Activated CD4-positive, alpha-beta T cell treated with anti-CD3 and anti-CD28 coated beads, Interleukin-2, amount 10 ng/mL, durations not matched to agents 24 days and 14 days (primary cell): ENCODE measurements at regions of chr11 and their contacts with region 1.

Region 1: GRCh38 chr11:57741132-57742086 is at the start of gene SELENOH:
- DNase-seq: peak; percentile 98
- H3K4me3 Mint-ChIP-seq: peak within 1 kb of the TSS; percentile 93
- H3K27ac Mint-ChIP-seq: peak within 1 kb of the TSS; percentile 96
- H3K4me1 Mint-ChIP-seq: peaks cover 30% of the 10 kb centered on the region
- H3K27me3 Mint-ChIP-seq: no peaks in the 10 kb centered on the region
- total RNA-seq, gene SELENOH: 211 and 216 TPM in 2 replicates

Region 2: GRCh38 chr11:57657194-57658022 is 84.0 kb before region 1 on chr11 and contains the start of gene CLP1:
- intact Hi-C with region 1: loop called (anchors 1 kb)
- DNase-seq: peak; percentile 100
- H3K4me3 Mint-ChIP-seq: peak within 1 kb of the TSS; percentile 86
- H3K27ac Mint-ChIP-seq: peak within 1 kb of the TSS; percentile 88
- H3K4me1 Mint-ChIP-seq: peaks cover 18% of the 10 kb centered on the region
- H3K27me3 Mint-ChIP-seq: no peaks in the 10 kb centered on the region
- total RNA-seq, gene CLP1: 18.5 and 19.8 TPM in 2 replicates

Region 3: DNA sequence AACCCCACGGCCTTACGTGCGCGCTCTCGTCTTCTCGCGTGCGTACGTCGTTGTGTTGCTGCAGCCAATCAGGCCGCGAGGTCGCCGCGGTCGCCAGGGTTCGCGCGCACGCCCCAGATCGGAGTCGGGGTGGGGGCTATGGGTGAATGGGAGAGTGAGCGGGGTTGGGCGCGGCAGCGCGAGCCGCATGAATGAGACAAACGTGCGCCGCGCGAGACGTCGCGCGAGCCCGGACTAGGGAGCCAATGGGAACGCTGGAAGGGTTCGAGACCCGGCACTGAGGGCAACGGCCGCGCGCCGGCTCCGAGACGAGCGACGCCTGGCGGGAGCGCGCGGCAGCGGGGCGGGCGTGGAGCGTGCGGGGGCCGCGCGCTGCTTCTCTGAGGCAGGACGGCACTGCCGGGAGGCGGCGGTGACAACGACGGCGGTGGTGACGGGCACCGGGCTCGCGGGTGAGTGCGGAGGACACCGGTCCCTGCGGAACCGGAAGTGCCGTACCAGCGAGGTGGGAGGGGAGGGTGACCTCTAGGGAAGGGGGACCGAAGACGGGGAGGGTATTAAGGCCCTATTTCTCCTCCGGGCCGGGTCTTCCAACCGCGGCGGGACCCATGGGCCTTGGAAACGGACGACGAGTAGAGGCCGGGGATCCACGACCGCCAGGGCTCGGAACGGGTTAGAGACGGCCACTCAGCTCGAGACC is 73.5 kb before region 1 on chr11 and contains the start of gene ZDHHC5:
- intact Hi-C with region 1: loop called (anchors 1 kb)
- DNase-seq: peak; percentile 100
- H3K4me3 Mint-ChIP-seq: peak within 1 kb of the TSS; percentile 86
- H3K27ac Mint-ChIP-seq: peak within 1 kb of the TSS; percentile 97
- H3K4me1 Mint-ChIP-seq: peaks cover 35% of the 10 kb centered on the region
- H3K27me3 Mint-ChIP-seq: no peaks in the 10 kb centered on the region
- total RNA-seq, gene ZDHHC5: 78.4 and 80.9 TPM in 2 replicates

Region 4: DNA sequence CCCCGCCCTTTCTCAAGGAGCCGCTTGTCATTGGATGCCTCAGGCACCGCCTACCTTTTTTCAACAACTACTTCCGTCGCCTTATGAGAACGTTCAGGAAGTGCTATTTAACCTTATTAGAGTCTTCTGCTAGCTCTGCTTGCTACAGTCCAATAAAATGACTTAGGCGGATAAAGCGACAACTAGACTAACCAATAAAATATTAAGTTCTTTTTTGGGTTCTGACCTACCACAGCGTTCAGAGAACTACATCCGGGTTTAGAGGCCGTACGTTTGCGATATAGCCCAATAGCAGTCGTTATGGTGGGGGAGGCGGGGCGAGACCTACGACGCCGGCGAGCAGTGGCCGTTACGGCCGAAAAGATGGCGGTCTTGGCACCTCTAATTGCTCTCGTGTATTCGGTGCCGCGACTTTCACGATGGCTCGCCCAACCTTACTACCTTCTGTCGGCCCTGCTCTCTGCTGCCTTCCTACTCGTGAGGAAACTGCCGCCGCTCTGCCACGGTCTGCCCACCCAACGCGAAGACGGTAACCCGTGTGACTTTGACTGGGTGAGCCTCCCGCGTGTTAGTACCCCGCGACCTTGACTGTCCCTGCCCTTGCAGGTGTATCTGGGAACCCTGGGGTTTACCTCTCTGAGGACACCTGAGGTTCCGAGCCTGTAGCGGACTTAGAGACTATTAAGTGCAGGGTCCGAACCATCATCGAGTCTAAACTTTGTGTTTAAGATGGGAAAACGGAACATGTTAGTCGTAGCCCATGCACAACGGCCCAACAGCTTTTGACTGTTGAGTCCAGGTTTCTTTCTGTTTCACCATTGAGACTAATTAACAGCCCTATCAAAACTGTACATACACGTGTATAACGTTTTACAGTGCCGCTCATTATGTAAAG is 28.9 kb before region 1 on chr11 and contains the start of gene TMX2:
- intact Hi-C with region 1: loop called (anchors 1 kb)
- DNase-seq: peak; percentile 97
- H3K4me3 Mint-ChIP-seq: peak within 1 kb of the TSS; percentile 95
- H3K27ac Mint-ChIP-seq: peak within 1 kb of the TSS; percentile 96
- H3K4me1 Mint-ChIP-seq: peaks cover 39% of the 10 kb centered on the region
- H3K27me3 Mint-ChIP-seq: no peaks in the 10 kb centered on the region
- total RNA-seq, gene TMX2: 99.0 and 99.2 TPM in 2 replicates

Region 5: GRCh38 chr11:57792060-57792541 is 50.7 kb after region 1 on chr11:
- intact Hi-C with region 1: loop called (anchors 1 kb)
- DNase-seq: peak; percentile 95
- H3K4me3 Mint-ChIP-seq: peak overlapping the region; percentile 79
- H3K27ac Mint-ChIP-seq: peak overlapping the region; percentile 93
- H3K4me1 Mint-ChIP-seq: peaks cover 41% of the 10 kb centered on the region
- H3K27me3 Mint-ChIP-seq: no peaks in the 10 kb centered on the region

Region 6: DNA sequence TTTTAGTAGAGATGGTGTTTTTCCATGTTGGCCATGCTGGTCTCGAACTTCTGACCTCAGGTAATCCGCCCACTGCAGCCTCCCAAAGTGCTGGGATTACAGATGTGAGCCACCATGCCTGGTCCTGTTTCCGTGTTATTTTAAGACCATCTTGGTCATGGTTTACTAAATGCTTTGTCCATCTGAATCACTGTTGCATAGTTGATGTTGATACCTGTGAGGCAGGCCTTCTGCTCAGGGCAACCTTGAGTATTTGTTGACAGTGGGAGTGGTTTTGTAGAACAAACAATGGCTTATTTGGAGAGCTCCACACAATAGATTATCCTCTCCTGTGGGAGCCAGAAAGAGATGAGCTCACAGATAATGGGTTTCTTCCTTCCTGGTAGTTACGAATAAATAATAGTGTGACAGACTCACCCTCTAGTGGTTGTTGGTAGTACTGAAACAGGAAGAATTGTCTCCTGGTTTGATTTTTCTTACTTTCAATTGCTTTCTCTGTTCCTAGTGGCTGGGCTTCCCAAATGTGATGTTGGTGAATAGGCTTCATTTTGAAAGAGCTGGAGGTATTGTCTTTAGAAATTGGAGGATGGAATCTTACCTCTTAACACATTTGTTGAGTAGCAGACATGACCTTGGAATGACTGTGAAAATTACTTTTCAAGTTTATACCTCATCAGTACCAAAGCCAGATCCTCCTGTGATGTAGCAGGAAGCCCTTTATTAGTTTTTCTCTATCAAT is 59.2 kb after region 1 on chr11:
- intact Hi-C with region 1: loop called (anchors 2 kb)
- DNase-seq: peak; percentile 80
- H3K4me3 Mint-ChIP-seq: peak overlapping the region; percentile 32
- H3K27ac Mint-ChIP-seq: peak overlapping the region; percentile 23
- H3K4me1 Mint-ChIP-seq: peaks cover 28% of the 10 kb centered on the region
- H3K27me3 Mint-ChIP-seq: no peaks in the 10 kb centered on the region